ENCODE measurements at regions of chr20 and their contacts with region 1.

Region 1: DNA sequence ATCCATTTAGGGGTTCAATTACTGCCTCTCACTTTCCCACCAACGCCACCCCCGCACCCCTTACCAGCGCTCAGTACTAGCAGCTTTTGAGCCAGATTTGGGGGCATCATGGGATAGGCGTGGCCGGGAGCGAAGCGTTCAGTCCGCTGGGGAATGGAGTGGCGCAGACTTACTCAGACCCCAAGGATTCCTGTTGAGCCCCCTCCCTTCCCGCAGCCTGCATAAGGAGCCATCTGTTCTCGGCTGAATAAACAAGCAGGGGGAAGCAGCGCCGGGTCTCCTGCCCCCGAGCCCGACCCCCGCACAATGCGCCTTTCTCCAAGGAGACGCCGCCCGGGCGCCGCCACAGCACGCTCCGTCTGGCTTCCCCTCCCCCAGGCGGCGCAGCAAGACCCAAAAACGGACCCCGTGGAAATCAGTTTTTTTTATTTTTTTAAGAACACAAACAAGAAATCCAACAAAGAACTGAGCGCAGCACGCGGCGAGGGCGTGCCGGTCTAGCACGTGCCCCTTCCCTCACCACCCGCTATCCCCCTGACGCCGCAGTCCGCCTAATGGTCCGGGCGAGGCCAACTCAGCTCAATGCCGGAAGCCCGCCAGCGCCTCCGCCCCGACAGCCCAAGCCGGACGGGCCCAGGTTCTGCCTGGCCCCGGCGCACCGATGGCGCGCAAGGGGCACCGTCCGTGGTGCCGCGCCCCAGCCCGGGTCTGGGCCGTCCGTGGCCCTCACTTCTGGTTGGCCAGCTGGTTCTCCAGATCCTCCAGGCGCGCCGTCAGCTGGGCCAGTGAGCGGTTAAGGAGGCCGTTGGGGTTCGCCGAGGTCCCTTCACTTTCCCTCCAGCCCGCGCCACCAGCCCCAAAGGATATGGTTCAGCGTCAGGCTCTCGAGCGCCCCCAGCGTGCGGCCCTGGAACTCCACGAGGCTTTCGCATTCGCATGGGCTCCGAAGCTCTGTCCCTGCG is 13.3 kb upstream of the RBPJL start:
- DNase-seq: peak; percentile 92
- ATAC-seq: peak; percentile 93
- H3K4me3 Mint-ChIP-seq: peak overlapping the region; percentile 67
- H3K27ac Mint-ChIP-seq: peak overlapping the region; percentile 42
- H3K4me1 Mint-ChIP-seq: peaks cover 3% of the 10 kb centered on the region
- H3K27me3 Mint-ChIP-seq: peaks cover 33% of the 10 kb centered on the region

Region 2: DNA sequence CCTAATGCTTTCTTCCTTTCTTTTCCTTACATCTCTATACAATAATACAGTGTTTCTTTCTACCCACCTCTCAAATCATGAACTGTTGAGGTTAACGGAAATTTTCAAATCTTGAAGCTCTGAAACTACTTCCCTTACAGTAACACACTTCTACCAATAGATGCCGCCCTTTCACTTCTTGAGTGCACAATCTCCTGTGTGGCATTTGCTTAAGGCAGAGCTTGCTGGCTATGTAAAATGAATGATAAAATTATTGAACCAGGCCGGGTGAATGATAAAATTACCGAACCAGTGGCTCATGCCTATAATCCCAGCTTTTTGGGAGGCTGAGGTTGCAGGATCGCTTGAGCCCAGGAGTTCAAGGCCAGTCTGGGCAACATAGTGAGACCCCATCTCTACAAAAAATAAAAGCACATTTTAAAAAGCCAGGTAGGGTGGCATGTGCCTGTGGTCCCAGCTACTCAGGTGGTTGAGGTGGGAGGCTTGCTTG is 249.2 kb before region 1 on chr20:
- CTCF ChIA-PET with region 1: interaction called, 8 read pairs
- POLR2A ChIA-PET with region 1: no interaction called
- intact Hi-C with region 1: loop called in 1 of 2 experiments (anchors 5 kb)
- DNase-seq: peak; percentile 52
- ATAC-seq: peak; percentile 86
- H3K4me3 Mint-ChIP-seq: no peak overlapping the region
- H3K27ac Mint-ChIP-seq: peak overlapping the region; percentile 93
- H3K4me1 Mint-ChIP-seq: peaks cover 76% of the 10 kb centered on the region
- H3K27me3 Mint-ChIP-seq: no peaks in the 10 kb centered on the region

Region 3: DNA sequence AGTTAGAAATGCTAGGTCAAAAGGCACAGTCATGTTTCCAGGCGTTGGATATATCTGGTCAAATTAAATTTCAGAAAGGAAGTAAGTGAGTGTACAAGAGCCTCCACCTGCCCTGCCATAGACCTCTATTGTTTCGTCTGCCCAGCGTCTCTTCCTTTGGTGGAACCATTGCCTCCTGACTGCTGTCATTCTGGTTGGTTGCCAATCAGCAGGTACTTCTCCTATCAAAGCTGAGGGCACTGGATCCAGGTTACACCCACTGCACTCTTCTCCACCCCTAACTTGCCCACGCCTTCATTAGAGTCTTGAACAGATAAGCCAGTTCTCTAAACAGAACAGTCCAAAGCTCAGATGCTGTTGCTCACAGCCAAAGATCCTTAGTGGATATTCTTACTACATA is 175.7 kb before region 1 on chr20:
- CTCF ChIA-PET with region 1: interaction called, 28 read pairs
- POLR2A ChIA-PET with region 1: no interaction called
- intact Hi-C with region 1: no loop called
- DNase-seq: no peak
- ATAC-seq: no peak
- H3K4me3 Mint-ChIP-seq: no peak overlapping the region
- H3K27ac Mint-ChIP-seq: no peak overlapping the region
- H3K4me1 Mint-ChIP-seq: peaks cover 4% of the 10 kb centered on the region
- H3K27me3 Mint-ChIP-seq: peaks cover 11% of the 10 kb centered on the region

Region 4: GRCh38 chr20:45235995-45236394 is 57.3 kb before region 1 on chr20:
- CTCF ChIA-PET with region 1: interaction called, 5 read pairs
- POLR2A ChIA-PET with region 1: no interaction called
- intact Hi-C with region 1: loop called in 1 of 2 experiments (anchors 5 kb)
- DNase-seq: peak; percentile 34
- ATAC-seq: no peak
- H3K4me3 Mint-ChIP-seq: no peak overlapping the region
- H3K27ac Mint-ChIP-seq: no peak overlapping the region
- H3K4me1 Mint-ChIP-seq: no peaks in the 10 kb centered on the region
- H3K27me3 Mint-ChIP-seq: peaks cover 33% of the 10 kb centered on the region

Region 5: DNA sequence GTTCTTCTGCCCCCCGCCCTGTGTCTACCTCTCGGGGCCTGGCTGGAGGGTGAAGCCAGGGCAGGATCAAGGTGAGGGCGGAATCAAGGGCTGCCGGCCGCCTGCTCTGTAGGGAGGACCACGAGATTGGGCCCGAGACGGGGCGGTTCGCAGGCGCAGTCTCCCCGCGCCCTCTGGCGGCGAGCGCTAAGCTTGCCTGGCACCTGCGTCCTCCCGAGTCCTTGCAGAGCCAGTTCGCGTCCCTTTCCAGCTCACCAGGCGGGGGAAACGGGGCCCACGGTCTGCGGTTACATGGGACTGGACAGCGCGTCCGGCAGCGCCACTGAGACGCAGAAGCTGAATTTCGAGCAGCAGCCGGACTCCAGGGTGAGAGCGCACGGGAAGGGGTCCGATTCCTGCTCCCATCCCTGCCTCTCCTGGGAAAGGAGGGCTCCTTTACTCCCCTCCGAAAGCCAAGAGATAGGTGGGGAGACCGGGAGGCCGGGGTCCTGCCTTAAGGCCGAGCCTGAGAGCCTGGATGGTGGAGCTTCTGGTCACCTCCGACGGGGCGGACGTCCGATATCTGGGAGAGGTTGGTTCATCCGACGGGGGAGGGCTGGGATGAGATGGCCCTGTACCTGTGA is 18.4 kb after region 1 on chr20:
- CTCF ChIA-PET with region 1: interaction called, 53 read pairs
- POLR2A ChIA-PET with region 1: no interaction called
- intact Hi-C with region 1: loop called in 1 of 2 experiments (anchors 1 kb)
- DNase-seq: peak; percentile 84
- ATAC-seq: peak; percentile 86
- H3K4me3 Mint-ChIP-seq: no peak overlapping the region
- H3K27ac Mint-ChIP-seq: no peak overlapping the region
- H3K4me1 Mint-ChIP-seq: peaks cover 6% of the 10 kb centered on the region
- H3K27me3 Mint-ChIP-seq: peaks cover 45% of the 10 kb centered on the region

Region 6: GRCh38 chr20:45436732-45437391 is 143.5 kb after region 1 on chr20:
- CTCF ChIA-PET with region 1: interaction called, 18 read pairs
- POLR2A ChIA-PET with region 1: no interaction called
- intact Hi-C with region 1: no loop called
- DNase-seq: peak; percentile 91
- ATAC-seq: peak; percentile 99
- H3K4me3 Mint-ChIP-seq: peak overlapping the region; percentile 69
- H3K27ac Mint-ChIP-seq: no peak overlapping the region
- H3K4me1 Mint-ChIP-seq: peaks cover 17% of the 10 kb centered on the region
- H3K27me3 Mint-ChIP-seq: no peaks in the 10 kb centered on the region

Measured in activated CD4-positive, alpha-beta T cell treated with anti-CD3 and anti-CD28 coated beads for 36 hours (primary cell).